Naive thymus-derived CD8-positive, alpha-beta T cell (primary cell): ENCODE measurements at regions of chr3 and their contacts with region 1.

Region 1: GRCh38 chr3:50192689-50193141 is 1.3 kb downstream of the GNAT1 start:
- DNase-seq: peak; percentile 71 to 91 (median 84)
- ATAC-seq: peak; percentile 26 to 47
- H3K4me3 Mint-ChIP-seq: peak overlapping the region in 9 of 10 donors; percentile 19 to 72 (median 54)
- H3K27ac Mint-ChIP-seq: peak overlapping the region in 6 of 10 donors; percentile 13 to 84 (median 74)
- H3K4me1 Mint-ChIP-seq: peaks cover 4 to 15% (median 11%) of the 10 kb centered on the region in 4 donors
- H3K27me3 Mint-ChIP-seq: peaks cover 0 to 17% (median 5%) of the 10 kb centered on the region in 5 donors

Region 2: GRCh38 chr3:50227390-50228183 is 34.9 kb after region 1 on chr3:
- POLR2A ChIA-PET with region 1: interaction called, 48 read pairs
- DNase-seq: peak; percentile 85 to 94 (median 92)
- ATAC-seq: peak; percentile 83 to 84
- H3K4me3 Mint-ChIP-seq: peak overlapping the region; percentile 90 to 99 (median 95)
- H3K27ac Mint-ChIP-seq: peak overlapping the region; percentile 88 to 96 (median 95)
- H3K4me1 Mint-ChIP-seq: peaks cover 21 to 50% (median 27%) of the 10 kb centered on the region in 4 donors
- H3K27me3 Mint-ChIP-seq: peaks cover 0 to 3% (median 0%) of the 10 kb centered on the region in 5 donors

Region 3: GRCh38 chr3:50272911-50273693 is 80.4 kb after region 1 on chr3:
- POLR2A ChIA-PET with region 1: interaction called, 12 read pairs
- DNase-seq: peak; percentile 65 to 90 (median 82)
- ATAC-seq: peak; percentile 84 to 87
- H3K4me3 Mint-ChIP-seq: peak overlapping the region in 9 of 10 donors; percentile 52 to 84 (median 72)
- H3K27ac Mint-ChIP-seq: peak overlapping the region in 6 of 10 donors; percentile 37 to 79 (median 72)
- H3K4me1 Mint-ChIP-seq: peaks cover 16 to 29% (median 27%) of the 10 kb centered on the region in 4 donors
- H3K27me3 Mint-ChIP-seq: peaks cover 13 to 55% (median 25%) of the 10 kb centered on the region in 5 donors